ENCODE measurements at regions of chr21 and their contacts with region 1.

Region 1: GRCh38 chr21:41068967-41069642 is 98.9 kb upstream of the BACE2 start:
- DNase-seq: peak in 3 of 4 donors; percentile 74 to 93 (median 86)
- ATAC-seq: peak; percentile 98
- H3K4me3 ChIP-seq: no peak overlapping the region
- H3K27ac ChIP-seq: no peak overlapping the region
- H3K4me1 ChIP-seq: peaks cover 5 to 8% of the 10 kb centered on the region in 2 donors
- H3K27me3 ChIP-seq: peaks cover 10 to 42% of the 10 kb centered on the region in 2 donors
- CTCF ChIP-seq: peak; percentile 76 to 89

Region 2: DNA sequence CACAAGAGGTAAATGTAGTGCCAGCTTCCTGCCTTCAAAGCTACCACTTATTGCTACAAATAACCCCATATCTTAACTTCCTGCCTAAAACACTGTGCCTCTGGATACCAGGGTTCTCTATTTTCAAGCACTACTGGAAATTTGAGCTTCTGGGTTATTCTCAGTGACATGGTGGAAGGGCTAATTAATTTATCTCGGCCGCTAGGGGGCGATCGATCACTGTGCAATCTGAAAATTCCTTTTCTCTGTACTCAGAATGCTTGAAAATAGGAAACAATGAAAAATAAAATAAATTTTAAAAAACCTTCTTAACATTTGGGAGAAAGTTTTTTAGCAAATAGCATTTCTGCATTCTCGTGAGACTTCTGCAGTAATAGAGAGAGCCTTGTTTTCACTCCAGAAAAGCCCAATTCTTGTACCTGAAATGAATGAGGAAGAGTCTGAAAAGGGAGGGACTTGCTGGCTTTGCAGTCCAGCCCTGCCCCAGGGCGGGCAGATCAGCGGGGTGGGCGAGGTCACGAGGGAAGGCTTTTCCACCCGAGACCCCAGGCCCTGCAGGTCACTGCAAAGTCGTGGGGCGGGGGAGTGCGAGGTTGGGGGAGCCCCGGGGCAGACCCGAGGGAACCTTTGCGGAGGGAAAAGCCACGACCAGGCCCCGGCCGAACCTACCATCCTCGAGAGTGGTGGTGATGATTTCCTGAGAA is 925.1 kb before region 1 on chr21:
- intact Hi-C with region 1: loop called in 1 of 2 experiments (anchors 10 kb)
- DNase-seq: peak in 2 of 4 donors; percentile 43 to 72
- ATAC-seq: peak; percentile 82
- H3K4me3 ChIP-seq: no peak overlapping the region
- H3K27ac ChIP-seq: no peak overlapping the region
- H3K4me1 ChIP-seq: no peaks in the 10 kb centered on the region
- H3K27me3 ChIP-seq: no peaks in the 10 kb centered on the region
- CTCF ChIP-seq: peak; percentile 45 to 76

Region 3: GRCh38 chr21:40577285-40578043 is 491.6 kb before region 1 on chr21:
- intact Hi-C with region 1: no loop called
- DNase-seq: no peak
- ATAC-seq: no peak
- H3K4me3 ChIP-seq: no peak overlapping the region
- H3K27ac ChIP-seq: no peak overlapping the region
- H3K4me1 ChIP-seq: no peaks in the 10 kb centered on the region
- H3K27me3 ChIP-seq: peaks cover 0 to 5% of the 10 kb centered on the region in 2 donors
- CTCF ChIP-seq: no peak